ENCODE measurements at regions of chr6 and their contacts with region 1.

Region 1: GRCh38 chr6:35402136-35402855 is 49.8 kb upstream of the FANCE start:
- DNase-seq: no peak
- H3K4me3 Mint-ChIP-seq: no peak overlapping the region
- H3K27ac Mint-ChIP-seq: no peak overlapping the region
- H3K4me1 Mint-ChIP-seq: peaks cover 15% of the 10 kb centered on the region
- H3K27me3 Mint-ChIP-seq: no peaks in the 10 kb centered on the region
- CTCF ChIP-seq: no peak

Region 2: GRCh38 chr6:35391240-35391968 is 10.9 kb before region 1 on chr6:
- CTCF ChIA-PET with region 1: interaction called, 3 read pairs
- POLR2A ChIA-PET with region 1: interaction called, 12 read pairs
- intact Hi-C with region 1: no loop called
- DNase-seq: peak; percentile 79
- H3K4me3 Mint-ChIP-seq: no peak overlapping the region
- H3K27ac Mint-ChIP-seq: peak overlapping the region; percentile 81
- H3K4me1 Mint-ChIP-seq: peaks cover 28% of the 10 kb centered on the region
- H3K27me3 Mint-ChIP-seq: no peaks in the 10 kb centered on the region
- CTCF ChIP-seq: peak; percentile 22

Region 3: DNA sequence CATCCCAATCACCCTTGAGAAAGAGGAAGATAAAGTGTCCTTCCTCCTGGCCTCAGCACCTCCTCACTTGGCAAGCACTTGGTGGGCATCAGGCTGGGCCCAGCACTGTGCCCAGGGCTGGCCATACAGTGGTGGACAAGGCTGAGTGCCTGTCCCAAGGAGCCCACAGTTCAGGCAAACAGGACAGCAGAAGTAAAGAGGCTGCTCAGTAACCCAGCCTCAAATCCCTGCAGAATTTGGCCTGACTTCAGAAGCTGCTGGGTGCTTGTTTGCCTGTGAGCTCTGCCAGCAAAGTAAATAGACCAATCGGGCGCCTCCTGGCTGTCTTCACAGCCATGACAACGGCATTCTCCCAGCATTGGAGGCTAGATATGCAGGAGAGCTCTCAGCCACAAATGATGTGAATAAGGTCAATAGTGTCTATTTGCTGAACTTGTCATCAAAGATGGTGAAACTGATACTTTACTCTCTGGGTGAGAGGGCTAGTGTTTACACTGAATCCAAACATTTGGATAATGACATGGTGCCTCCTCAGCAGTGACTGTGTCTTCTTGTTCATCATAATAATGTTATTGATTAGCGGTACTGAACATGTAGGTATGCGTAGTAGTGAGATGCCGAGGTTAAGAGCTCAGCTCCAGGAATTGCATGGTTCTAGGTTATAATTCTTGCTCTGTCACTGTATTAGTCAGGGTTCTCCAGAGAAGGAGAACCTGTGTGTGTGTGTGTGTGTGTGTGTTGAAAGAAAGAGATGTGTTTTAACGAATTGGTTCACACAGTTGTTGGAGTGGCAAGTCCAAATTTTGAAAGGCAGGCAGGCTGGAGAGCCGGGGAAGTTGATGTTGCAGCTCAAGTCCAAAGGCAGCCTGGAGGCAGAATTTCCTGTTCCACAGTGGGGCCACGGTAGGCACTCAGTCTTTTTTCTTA is 13.0 kb after region 1 on chr6:
- CTCF ChIA-PET with region 1: interaction called, 10 read pairs
- POLR2A ChIA-PET with region 1: interaction called, 3 read pairs
- intact Hi-C with region 1: no loop called
- DNase-seq: peak; percentile 79
- H3K4me3 Mint-ChIP-seq: no peak overlapping the region
- H3K27ac Mint-ChIP-seq: peak overlapping the region; percentile 2
- H3K4me1 Mint-ChIP-seq: peaks cover 4% of the 10 kb centered on the region
- H3K27me3 Mint-ChIP-seq: no peaks in the 10 kb centered on the region
- CTCF ChIP-seq: peak; percentile 56